ENCODE measurements at regions of chr9 and their contacts with region 1.

Region 1: GRCh38 chr9:131697097-131697496 is 42.8 kb downstream of the RAPGEF1 start:
- DNase-seq: no peak
- H3K4me3 ChIP-seq: no peak overlapping the region
- H3K27ac ChIP-seq: no peak overlapping the region
- H3K4me1 ChIP-seq: peaks cover 17 to 60% (median 37%) of the 10 kb centered on the region in 4 experiments
- H3K27me3 ChIP-seq: no peaks in the 10 kb centered on the region

Region 2: GRCh38 chr9:131678499-131679111 is 18.5 kb before region 1 on chr9:
- CTCF ChIA-PET with region 1: interaction called, 27 read pairs
- POLR2A ChIA-PET with region 1: no interaction called
- DNase-seq: peak in 2 of 3 donors; percentile 58 to 60
- H3K4me3 ChIP-seq: no peak overlapping the region
- H3K27ac ChIP-seq: no peak overlapping the region
- H3K4me1 ChIP-seq: peaks cover 27 to 63% (median 47%) of the 10 kb centered on the region in 4 experiments
- H3K27me3 ChIP-seq: no peaks in the 10 kb centered on the region

Region 3: DNA sequence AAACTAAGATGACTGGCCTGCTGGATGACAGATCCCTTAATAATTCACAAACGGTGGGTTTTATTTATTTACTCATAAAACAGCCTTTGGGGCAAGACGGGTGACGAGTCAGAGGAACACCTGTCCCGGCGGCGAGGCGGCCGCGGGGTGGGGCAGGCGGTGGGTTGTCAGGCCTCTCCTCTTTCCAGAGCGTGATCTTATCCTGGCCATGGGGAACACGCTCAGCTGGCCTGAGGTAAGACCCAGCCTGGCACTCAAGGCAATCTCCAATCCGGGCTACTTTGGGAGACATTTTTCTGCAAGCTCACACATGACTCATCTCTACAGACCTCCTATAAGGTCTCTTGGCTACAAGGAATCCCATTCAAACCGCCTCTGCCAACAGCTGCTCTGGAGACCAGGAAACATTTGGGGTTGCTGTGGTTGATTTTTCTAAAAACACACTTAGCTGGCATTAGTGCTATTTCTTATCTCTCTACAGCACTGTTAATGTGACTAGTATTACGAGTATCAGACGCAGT is 36.5 kb after region 1 on chr9:
- CTCF ChIA-PET with region 1: interaction called, 10 read pairs
- POLR2A ChIA-PET with region 1: interaction called, 4 read pairs
- DNase-seq: peak; percentile 94 to 99 (median 99)
- H3K4me3 ChIP-seq: peak overlapping the region in 5 of 7 experiments; percentile 37 to 68 (median 56)
- H3K27ac ChIP-seq: peak overlapping the region; percentile 75 to 82
- H3K4me1 ChIP-seq: peaks cover 51 to 91% (median 87%) of the 10 kb centered on the region in 4 experiments
- H3K27me3 ChIP-seq: no peaks in the 10 kb centered on the region

Measured in common myeloid progenitor, CD34-positive (primary cell).